ENCODE measurements at regions of chr15 and their contacts with region 1.

Region 1: DNA sequence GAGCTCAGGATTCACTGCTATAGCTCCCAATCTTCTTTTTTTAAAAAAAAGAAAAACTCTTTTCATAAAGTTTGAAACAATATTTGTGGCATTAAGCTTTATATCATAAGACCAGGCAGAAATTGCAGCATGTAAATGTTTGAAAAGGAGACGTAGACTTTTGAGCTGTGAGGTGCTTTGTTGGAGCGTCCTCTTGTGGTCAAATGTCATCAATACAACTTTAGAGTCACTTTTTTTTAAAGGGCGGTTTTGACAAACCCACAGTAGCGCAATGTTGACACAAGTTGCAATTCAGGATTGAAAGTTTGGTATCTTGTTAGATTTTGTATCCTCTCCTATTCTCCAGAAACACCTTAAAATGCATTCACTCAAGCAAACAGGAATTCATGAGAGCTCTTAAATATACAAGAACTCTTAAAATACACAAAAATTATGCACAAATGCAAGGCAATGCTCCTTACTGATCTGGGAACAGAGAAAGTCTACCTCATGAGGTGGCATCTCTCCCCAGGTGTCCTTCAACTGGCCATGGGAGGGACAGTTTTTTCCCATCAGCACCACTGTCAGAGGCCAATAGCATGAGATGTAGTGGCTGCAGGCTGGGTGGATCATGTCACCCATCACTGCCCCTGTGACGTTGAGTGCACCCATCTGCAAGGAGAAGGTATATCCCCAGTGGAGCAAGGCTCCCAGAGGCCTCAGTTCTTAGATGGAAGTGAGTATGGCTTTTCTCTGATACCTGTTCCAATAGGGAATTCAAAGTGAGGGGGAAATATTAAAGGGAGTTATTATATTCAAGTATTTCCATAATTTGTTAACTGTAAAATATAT is 70.7 kb downstream of the ANXA2 start:
- DNase-seq: peak; percentile 47
- ATAC-seq: peak; percentile 74
- H3K4me3 ChIP-seq: no peak overlapping the region
- H3K27ac ChIP-seq: no peak overlapping the region
- H3K4me1 ChIP-seq: no peaks in the 10 kb centered on the region
- H3K27me3 ChIP-seq: peaks cover 42% of the 10 kb centered on the region
- CTCF ChIP-seq: peak; percentile 77 to 96 (median 83)
- POLR2A ChIP-seq: no peak
- RAD21 ChIP-seq: peak; percentile 91

Region 2: DNA sequence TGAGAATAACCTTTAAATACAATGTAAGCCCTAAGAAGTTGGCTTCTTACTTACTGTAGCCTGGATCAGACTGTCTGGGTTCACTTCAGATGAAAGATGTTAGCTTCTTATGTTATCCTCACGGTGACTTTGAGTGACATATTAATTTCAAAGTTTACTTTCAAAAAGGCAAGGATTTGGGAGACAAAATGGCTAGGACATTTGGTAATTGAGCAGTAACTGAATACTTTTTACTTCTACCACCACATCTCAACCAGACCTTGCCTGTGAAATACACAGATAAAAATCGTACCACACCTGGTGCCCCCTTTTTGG is 601.9 kb before region 1 on chr15:
- CTCF ChIA-PET with region 1: interaction called, 64 read pairs
- POLR2A ChIA-PET with region 1: no interaction called
- RAD21 ChIA-PET with region 1: interaction called, 3 to 5 read pairs
- intact Hi-C with region 1: loop called (anchors 1 kb)
- DNase-seq: no peak
- ATAC-seq: no peak
- H3K4me3 ChIP-seq: no peak overlapping the region
- H3K27ac ChIP-seq: no peak overlapping the region
- H3K4me1 ChIP-seq: peaks cover 6 to 7% of the 10 kb centered on the region in 2 experiments; a peak in 3 of 4 replicates
- H3K27me3 ChIP-seq: peaks cover 25% of the 10 kb centered on the region
- CTCF ChIP-seq: no peak
- POLR2A ChIP-seq: no peak
- RAD21 ChIP-seq: no peak

Region 3: DNA sequence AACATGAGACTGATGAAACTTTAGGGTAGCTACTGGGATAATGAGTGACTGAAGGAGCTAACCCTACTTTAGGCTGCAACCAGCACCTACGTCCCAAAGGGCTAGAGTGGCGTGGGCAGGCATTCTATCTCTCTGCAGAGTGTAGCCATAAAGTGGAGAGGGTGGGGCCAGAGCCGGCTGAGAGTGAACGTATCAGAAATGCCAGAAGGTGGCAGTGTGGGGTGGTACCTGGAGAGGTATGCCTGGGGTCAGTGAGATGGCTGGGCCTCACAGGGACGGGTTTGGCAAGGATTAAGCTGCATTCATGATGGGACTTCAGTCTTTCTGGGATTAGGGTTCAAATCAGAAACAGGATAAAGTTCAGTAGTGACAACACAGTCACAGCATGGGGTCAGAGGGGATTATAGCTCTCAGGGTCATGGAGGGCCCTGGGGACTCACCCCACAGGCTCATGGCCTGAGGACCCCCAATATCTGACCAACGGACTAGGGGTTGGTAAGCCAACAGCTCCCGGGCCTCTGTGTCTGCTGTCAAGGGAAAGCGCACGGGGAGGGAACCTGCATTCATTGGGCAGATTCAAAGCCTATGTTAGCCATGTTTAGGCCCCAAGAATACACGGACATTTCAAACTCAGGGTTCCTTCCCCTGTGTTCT is 409.4 kb before region 1 on chr15:
- CTCF ChIA-PET with region 1: interaction called, 13 read pairs
- POLR2A ChIA-PET with region 1: no interaction called
- RAD21 ChIA-PET with region 1: no interaction called
- intact Hi-C with region 1: loop called (anchors 1 kb)
- DNase-seq: peak; percentile 22
- ATAC-seq: peak; percentile 100
- H3K4me3 ChIP-seq: no peak overlapping the region
- H3K27ac ChIP-seq: no peak overlapping the region
- H3K4me1 ChIP-seq: no peaks in the 10 kb centered on the region
- H3K27me3 ChIP-seq: peaks cover 33% of the 10 kb centered on the region
- CTCF ChIP-seq: peak; percentile 29 to 71 (median 69); a peak in 5 of 6 replicates
- POLR2A ChIP-seq: no peak
- RAD21 ChIP-seq: peak; percentile 50

Region 4: DNA sequence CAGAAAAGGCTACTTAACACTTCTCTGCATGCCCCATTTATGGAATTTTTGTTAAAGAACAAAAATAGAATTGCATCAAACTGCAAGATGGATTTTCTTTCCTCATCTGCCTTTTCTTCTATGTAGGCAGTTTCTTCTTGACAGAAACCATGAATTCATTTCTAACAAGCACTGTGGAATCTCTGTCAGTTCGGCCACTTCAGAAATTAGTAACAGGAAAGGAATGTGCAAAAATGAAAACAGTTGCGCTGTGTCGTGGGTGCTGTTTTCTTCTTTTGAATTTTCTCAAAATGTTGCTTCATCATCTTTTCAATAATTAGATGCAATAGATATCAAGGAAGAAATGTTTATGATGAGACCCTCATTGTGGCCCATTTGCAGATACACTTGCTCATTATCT is 171.4 kb before region 1 on chr15:
- CTCF ChIA-PET with region 1: no interaction called
- POLR2A ChIA-PET with region 1: no interaction called
- RAD21 ChIA-PET with region 1: no interaction called
- intact Hi-C with region 1: no loop called
- DNase-seq: no peak
- ATAC-seq: no peak
- H3K4me3 ChIP-seq: no peak overlapping the region
- H3K27ac ChIP-seq: no peak overlapping the region
- H3K4me1 ChIP-seq: no peaks in the 10 kb centered on the region
- H3K27me3 ChIP-seq: peaks cover 74% of the 10 kb centered on the region
- CTCF ChIP-seq: no peak
- POLR2A ChIP-seq: no peak
- RAD21 ChIP-seq: no peak

Region 5: GRCh38 chr15:60444289-60444912 is 117.4 kb after region 1 on chr15:
- CTCF ChIA-PET with region 1: interaction called, 14 read pairs
- POLR2A ChIA-PET with region 1: no interaction called
- RAD21 ChIA-PET with region 1: no interaction called
- intact Hi-C with region 1: loop called (anchors 1 kb)
- DNase-seq: no peak
- ATAC-seq: no peak
- H3K4me3 ChIP-seq: no peak overlapping the region
- H3K27ac ChIP-seq: no peak overlapping the region
- H3K4me1 ChIP-seq: no peaks in the 10 kb centered on the region
- H3K27me3 ChIP-seq: no peaks in the 10 kb centered on the region
- CTCF ChIP-seq: peak; percentile 47 to 51 (median 49); a peak in 4 of 6 replicates
- POLR2A ChIP-seq: no peak
- RAD21 ChIP-seq: peak; percentile 69

Measured in HCT116 (cell line).